ENCODE measurements at regions of chr4 and their contacts with region 1.

Region 1: GRCh38 chr4:131613824-131614216 is 1535.3 kb upstream of the PCDH10 start:
- DNase-seq: peak; percentile 3
- H3K4me3 ChIP-seq: no peak overlapping the region
- H3K27ac ChIP-seq: no peak overlapping the region
- H3K4me1 ChIP-seq: peaks cover 16% of the 10 kb centered on the region
- H3K27me3 ChIP-seq: no peaks in the 10 kb centered on the region
- CTCF ChIP-seq: no peak

Region 2: DNA sequence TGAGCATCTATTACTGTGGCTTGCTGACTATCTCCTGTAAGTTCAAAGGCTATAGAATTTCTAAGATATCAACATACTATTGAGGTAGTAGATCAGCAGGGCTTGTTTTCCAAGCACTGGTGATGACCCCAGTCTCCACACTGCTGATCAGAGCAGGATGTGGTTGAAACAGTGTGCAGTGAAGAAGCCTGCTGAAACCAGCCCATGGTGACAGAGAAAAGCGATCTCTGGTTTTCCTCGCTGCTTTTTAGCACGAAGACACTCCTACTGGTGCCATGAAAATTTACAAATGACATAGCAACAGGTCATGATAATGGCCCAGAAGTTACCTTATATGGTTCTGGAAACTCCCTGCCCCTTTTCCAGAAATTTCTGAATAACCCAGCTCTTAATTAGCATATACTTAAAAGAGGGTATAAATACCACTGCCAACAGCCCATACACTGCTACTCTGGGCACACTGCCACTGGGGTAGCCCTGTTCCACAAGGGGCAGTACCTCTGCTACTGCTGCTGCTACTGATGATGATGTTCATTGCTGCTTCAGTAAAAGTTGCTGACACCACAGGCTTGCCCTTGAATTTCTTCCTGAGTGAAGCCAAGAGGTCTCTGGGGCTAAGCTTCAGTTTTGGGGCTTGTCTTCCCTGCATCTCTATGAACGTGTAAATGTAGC is 154.3 kb before region 1 on chr4:
- CTCF ChIA-PET with region 1: no interaction called
- dilution Hi-C with region 1: no loop called
- in situ Hi-C with region 1: no loop called
- intact Hi-C with region 1: no loop called
- DNase-seq: no peak
- H3K4me3 ChIP-seq: no peak overlapping the region
- H3K27ac ChIP-seq: no peak overlapping the region
- H3K4me1 ChIP-seq: no peaks in the 10 kb centered on the region
- H3K27me3 ChIP-seq: no peaks in the 10 kb centered on the region
- CTCF ChIP-seq: no peak

Region 3: GRCh38 chr4:131499141-131499873 is 114.5 kb before region 1 on chr4:
- CTCF ChIA-PET with region 1: no interaction called
- dilution Hi-C with region 1: no loop called
- in situ Hi-C with region 1: no loop called
- intact Hi-C with region 1: no loop called
- DNase-seq: peak; percentile 82
- H3K4me3 ChIP-seq: no peak overlapping the region
- H3K27ac ChIP-seq: peak overlapping the region; percentile 10
- H3K4me1 ChIP-seq: no peaks in the 10 kb centered on the region
- H3K27me3 ChIP-seq: no peaks in the 10 kb centered on the region
- CTCF ChIP-seq: no peak

Region 4: GRCh38 chr4:131584587-131584986 is 29.2 kb before region 1 on chr4:
- CTCF ChIA-PET with region 1: no interaction called
- dilution Hi-C with region 1: no loop called
- in situ Hi-C with region 1: no loop called
- intact Hi-C with region 1: loop called (anchors 1 kb)
- DNase-seq: peak; percentile 98
- H3K4me3 ChIP-seq: no peak overlapping the region
- H3K27ac ChIP-seq: peak overlapping the region; percentile 92
- H3K4me1 ChIP-seq: peaks cover 9% of the 10 kb centered on the region
- H3K27me3 ChIP-seq: no peaks in the 10 kb centered on the region
- CTCF ChIP-seq: no peak